AG04450 (cell line): ENCODE measurements at regions of chr12 and their contacts with region 1.

Region 1: GRCh38 chr12:53321074-53321814 is at the start of gene AAAS:
- DNase-seq: peak; percentile 84
- H3K4me3 ChIP-seq: peak within 1 kb of the TSS; percentile 98
- H3K27ac ChIP-seq: peak within 1 kb of the TSS; percentile 94
- H3K27me3 ChIP-seq: no peaks in the 10 kb centered on the region
- CTCF ChIP-seq: peak; percentile 99
- polyA plus RNA-seq, gene AAAS: 40.0 and 46.7 TPM in 2 replicates

Region 2: GRCh38 chr12:52879394-52880351 is 441.6 kb before region 1 on chr12:
- CTCF ChIA-PET with region 1: no interaction called
- POLR2A ChIA-PET with region 1: no interaction called
- DNase-seq: no peak
- H3K4me3 ChIP-seq: peak overlapping the region; percentile 35
- H3K27ac ChIP-seq: no peak overlapping the region
- H3K27me3 ChIP-seq: no peaks in the 10 kb centered on the region
- CTCF ChIP-seq: peak; percentile 87

Region 3: GRCh38 chr12:53159195-53159839 is 161.9 kb before region 1 on chr12:
- CTCF ChIA-PET with region 1: interaction called, 27 read pairs
- POLR2A ChIA-PET with region 1: no interaction called
- DNase-seq: peak; percentile 42
- H3K4me3 ChIP-seq: no peak overlapping the region
- H3K27ac ChIP-seq: no peak overlapping the region
- H3K27me3 ChIP-seq: no peaks in the 10 kb centered on the region
- CTCF ChIP-seq: peak; percentile 99

Region 4: DNA sequence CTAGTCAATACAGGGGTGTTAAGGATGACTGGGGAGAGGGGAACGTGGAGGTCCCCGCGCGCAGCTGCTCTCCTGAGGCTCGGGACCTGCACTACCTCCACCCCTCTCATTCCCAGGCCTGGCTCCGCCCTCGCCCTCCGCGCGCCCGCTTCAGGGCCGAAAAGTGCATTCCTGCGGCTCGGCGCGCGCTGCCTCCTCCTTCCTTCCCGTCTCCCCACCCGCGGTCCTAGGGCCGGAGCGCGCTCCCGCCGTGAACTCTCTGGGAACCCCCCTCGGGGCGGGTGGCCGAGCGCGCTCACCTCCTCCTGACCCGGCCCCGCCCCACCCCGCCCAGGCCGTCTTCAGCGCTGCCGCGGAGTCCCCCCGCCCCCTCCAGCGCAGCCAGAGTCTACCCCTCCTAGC is 100.4 kb before region 1 on chr12:
- CTCF ChIA-PET with region 1: interaction called, 137 read pairs
- POLR2A ChIA-PET with region 1: interaction called, 4 read pairs
- DNase-seq: peak; percentile 80
- H3K4me3 ChIP-seq: peak overlapping the region; percentile 80
- H3K27ac ChIP-seq: peak overlapping the region; percentile 95
- H3K27me3 ChIP-seq: no peaks in the 10 kb centered on the region
- CTCF ChIP-seq: no peak

Region 5: GRCh38 chr12:53302903-53303302 is 18.3 kb before region 1 on chr12:
- CTCF ChIA-PET with region 1: interaction called, 80 read pairs
- POLR2A ChIA-PET with region 1: interaction called, 9 read pairs
- DNase-seq: no peak
- H3K4me3 ChIP-seq: no peak overlapping the region
- H3K27ac ChIP-seq: no peak overlapping the region
- H3K27me3 ChIP-seq: no peaks in the 10 kb centered on the region
- CTCF ChIP-seq: no peak

Region 6: GRCh38 chr12:53344824-53345485 is 23.7 kb after region 1 on chr12:
- CTCF ChIA-PET with region 1: interaction called, 84 read pairs
- POLR2A ChIA-PET with region 1: interaction called, 25 read pairs
- DNase-seq: peak; percentile 33
- H3K4me3 ChIP-seq: peak overlapping the region; percentile 76
- H3K27ac ChIP-seq: peak overlapping the region; percentile 11
- H3K27me3 ChIP-seq: peaks cover 8% of the 10 kb centered on the region
- CTCF ChIP-seq: peak; percentile 88

Region 7: DNA sequence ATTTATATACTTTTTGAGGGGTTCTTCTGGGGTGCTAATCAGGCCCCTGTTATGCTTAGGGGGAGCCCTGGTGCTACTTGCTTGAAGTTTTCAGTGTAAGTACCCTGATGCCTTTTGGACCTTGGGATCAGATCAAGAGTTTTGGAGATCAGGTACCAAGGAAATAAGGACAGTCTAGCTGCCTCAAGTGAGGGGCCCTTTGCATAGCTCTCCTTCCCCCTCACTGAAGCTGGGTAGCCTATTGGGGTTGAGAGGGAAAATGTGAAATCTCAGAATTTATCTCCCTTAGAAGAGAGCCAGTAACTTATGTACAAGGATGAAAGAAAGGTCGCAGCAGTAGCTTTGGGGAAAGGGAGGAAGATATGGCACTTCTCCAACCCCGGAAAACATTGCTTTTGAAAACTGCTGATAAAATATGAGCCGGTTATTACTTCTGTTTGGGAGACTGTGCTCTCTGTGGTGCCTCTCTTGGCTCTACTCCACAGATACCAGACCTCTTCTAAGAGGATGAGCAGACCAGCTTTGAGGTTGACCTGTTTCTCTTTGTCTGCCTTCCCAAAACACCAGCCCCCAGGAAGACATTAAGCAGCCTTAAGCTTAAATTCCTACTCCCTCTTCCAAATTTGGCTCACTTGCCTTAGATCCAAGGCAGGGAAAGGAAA is 93.6 kb after region 1 on chr12:
- CTCF ChIA-PET with region 1: interaction called, 10 read pairs
- POLR2A ChIA-PET with region 1: interaction called, 3 read pairs
- DNase-seq: no peak
- H3K4me3 ChIP-seq: no peak overlapping the region
- H3K27ac ChIP-seq: no peak overlapping the region
- H3K27me3 ChIP-seq: no peaks in the 10 kb centered on the region
- CTCF ChIP-seq: no peak